HCT116 (cell line): ENCODE measurements at regions of chr12 and their contacts with region 1.

Region 1: DNA sequence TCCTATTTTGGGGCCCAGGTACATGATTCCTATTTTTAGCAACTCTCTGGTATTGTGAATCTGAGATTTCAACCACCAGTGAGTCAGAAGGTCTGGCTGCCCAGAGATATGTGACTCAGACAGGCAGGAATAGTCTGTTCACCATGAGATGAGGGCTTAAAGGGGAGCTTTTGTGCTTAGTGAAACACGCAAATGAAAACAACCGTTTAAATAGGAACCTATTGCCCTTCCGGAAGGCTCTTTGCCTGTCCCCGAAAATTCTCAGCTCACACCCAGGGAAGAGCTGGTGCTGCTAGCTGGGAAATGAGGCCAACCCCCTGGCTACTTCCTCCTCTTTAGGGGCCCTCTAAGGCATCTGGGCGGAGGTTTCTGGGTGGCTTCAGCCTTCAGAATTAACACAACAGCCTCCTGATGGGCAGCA is 283.6 kb downstream of the CACNA1C start:
- DNase-seq: peak; percentile 75
- ATAC-seq: peak; percentile 90
- H3K4me3 ChIP-seq: peak overlapping the region; percentile 10 to 46; a peak in 3 of 4 replicates
- H3K27ac ChIP-seq: peak overlapping the region; percentile 98
- H3K4me1 ChIP-seq: peaks cover 51 to 74% of the 10 kb centered on the region in 2 experiments
- H3K27me3 ChIP-seq: no peaks in the 10 kb centered on the region
- CTCF ChIP-seq: no peak
- POLR2A ChIP-seq: no peak
- RAD21 ChIP-seq: peak; percentile 22; the same call in 1 of the 2 replicates

Region 2: GRCh38 chr12:3777206-3777809 is 1440.9 kb after region 1 on chr12:
- CTCF ChIA-PET with region 1: no interaction called
- POLR2A ChIA-PET with region 1: no interaction called
- RAD21 ChIA-PET with region 1: no interaction called
- intact Hi-C with region 1: loop called (anchors 10 kb)
- DNase-seq: peak; percentile 33
- ATAC-seq: peak; percentile 90
- H3K4me3 ChIP-seq: no peak overlapping the region
- H3K27ac ChIP-seq: no peak overlapping the region
- H3K4me1 ChIP-seq: no peaks in the 10 kb centered on the region
- H3K27me3 ChIP-seq: peaks cover 31% of the 10 kb centered on the region
- CTCF ChIP-seq: peak; percentile 71 to 74 (median 71)
- POLR2A ChIP-seq: no peak
- RAD21 ChIP-seq: peak; percentile 82